Ovary (tissue), 10 donors: ENCODE measurements at regions of chr16 and their contacts with region 1.

Region 1: DNA sequence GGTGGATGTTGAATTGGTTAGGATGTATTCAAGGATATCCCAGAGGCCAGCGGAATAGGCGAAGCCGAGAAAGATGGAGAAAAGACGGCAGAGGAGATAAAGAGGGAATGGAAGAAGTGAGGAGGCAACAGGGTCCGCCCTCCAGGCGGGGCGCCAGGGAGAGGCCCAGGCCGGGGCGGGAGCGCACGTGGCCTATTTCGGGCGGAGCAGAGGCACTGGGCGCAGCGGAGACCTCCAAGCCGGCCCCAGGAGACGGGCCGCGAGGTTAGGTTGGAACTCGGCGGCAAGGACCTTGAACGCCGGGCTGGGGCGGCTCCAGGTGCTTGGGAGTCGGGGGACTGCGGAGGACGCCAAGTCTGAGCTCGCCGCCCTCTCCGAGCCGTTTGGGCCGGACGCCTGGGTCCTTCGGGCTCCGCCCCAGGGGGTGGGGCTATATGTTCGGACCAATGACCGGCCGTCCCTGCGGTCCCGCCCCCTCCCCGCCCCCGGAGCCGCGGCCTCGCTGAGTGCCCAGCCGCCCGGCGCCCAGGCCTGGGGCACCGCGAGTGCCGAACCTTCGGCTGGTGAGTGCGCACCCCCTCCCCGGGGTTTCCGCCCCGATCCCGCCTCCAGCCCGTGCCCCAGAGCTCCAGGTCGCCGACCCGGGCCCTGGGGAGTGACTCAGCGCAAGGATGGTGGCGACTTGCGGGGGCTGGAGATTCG is at the start of gene ZNF771:
- DNase-seq: peak; percentile 93 to 98 (median 95)
- H3K4me3 ChIP-seq: peak within 1 kb of the TSS; percentile 61
- H3K27ac ChIP-seq: peak within 1 kb of the TSS; percentile 40 to 81
- H3K4me1 ChIP-seq: peaks cover 9% of the 10 kb centered on the region
- H3K27me3 ChIP-seq: no peaks in the 10 kb centered on the region
- CTCF ChIP-seq: peak in 2 of 3 donors; percentile 13 to 19
- EP300 ChIP-seq: no peak
- POLR2A ChIP-seq: peak; percentile 80
- total RNA-seq, gene ZNF771: 12.4 to 33.3 (median 18.7) TPM

Region 2: GRCh38 chr16:30032083-30032819 is 375.0 kb before region 1 on chr16:
- intact Hi-C with region 1: no loop called
- DNase-seq: peak in 4 of 5 donors; percentile 36 to 51 (median 47)
- H3K4me3 ChIP-seq: no peak overlapping the region
- H3K27ac ChIP-seq: no peak overlapping the region
- H3K4me1 ChIP-seq: no peaks in the 10 kb centered on the region
- H3K27me3 ChIP-seq: peaks cover 3% of the 10 kb centered on the region
- CTCF ChIP-seq: peak; percentile 46 to 50 (median 47)
- EP300 ChIP-seq: no peak
- POLR2A ChIP-seq: no peak

Region 3: GRCh38 chr16:30065143-30065850 is 342.0 kb before region 1 on chr16 and contains the start of gene ALDOA:
- intact Hi-C with region 1: loop called in 1 of 4 experiments (anchors 10 kb)
- DNase-seq: peak; percentile 98
- H3K4me3 ChIP-seq: peak within 1 kb of the TSS; percentile 97
- H3K27ac ChIP-seq: peak within 1 kb of the TSS; percentile 91 to 99
- H3K4me1 ChIP-seq: peaks cover 21% of the 10 kb centered on the region
- H3K27me3 ChIP-seq: no peaks in the 10 kb centered on the region
- CTCF ChIP-seq: peak in 1 of 3 donors; percentile 38
- EP300 ChIP-seq: peak; percentile 65
- POLR2A ChIP-seq: peak; percentile 91
- total RNA-seq, gene ALDOA: 395 to 1,259 (median 847) TPM

Region 4: DNA sequence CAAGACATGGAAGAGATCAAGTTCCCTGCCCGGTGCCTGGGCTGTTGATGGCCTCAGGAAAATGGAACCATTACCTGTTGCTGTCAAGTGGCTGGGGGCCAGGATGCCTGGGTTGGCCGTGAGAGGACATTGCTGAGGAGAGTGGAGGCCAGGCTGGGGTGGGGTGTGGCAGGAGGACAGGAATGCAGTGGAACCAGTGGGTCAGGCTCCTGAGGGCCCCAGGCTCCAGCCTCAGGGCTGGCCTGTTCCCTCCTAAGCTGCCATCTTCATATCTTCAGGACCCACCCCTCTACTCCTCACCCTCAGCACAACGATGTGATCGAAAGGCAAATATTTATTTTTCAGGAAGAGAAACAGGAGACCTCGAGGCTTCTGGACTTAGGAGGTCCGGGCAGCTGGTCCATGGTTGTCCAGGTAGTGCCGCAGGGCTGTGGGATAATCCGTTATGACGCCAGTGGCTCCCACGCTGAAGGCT is 302.7 kb before region 1 on chr16:
- intact Hi-C with region 1: loop called in 2 of 4 experiments (anchors 5 to 10 kb)
- DNase-seq: no peak
- H3K4me3 ChIP-seq: no peak overlapping the region
- H3K27ac ChIP-seq: no peak overlapping the region
- H3K4me1 ChIP-seq: no peaks in the 10 kb centered on the region
- H3K27me3 ChIP-seq: no peaks in the 10 kb centered on the region
- CTCF ChIP-seq: no peak
- EP300 ChIP-seq: no peak
- POLR2A ChIP-seq: no peak

Region 5: GRCh38 chr16:30370444-30371247 is 36.6 kb before region 1 on chr16 and contains the start of gene TBC1D10B:
- intact Hi-C with region 1: loop called in 1 of 4 experiments (anchors 5 kb)
- DNase-seq: peak; percentile 96 to 100 (median 98)
- H3K4me3 ChIP-seq: peak within 1 kb of the TSS; percentile 72
- H3K27ac ChIP-seq: peak within 1 kb of the TSS; percentile 77 to 81
- H3K4me1 ChIP-seq: peaks cover 6% of the 10 kb centered on the region
- H3K27me3 ChIP-seq: no peaks in the 10 kb centered on the region
- CTCF ChIP-seq: peak in 1 of 3 donors; percentile 43
- EP300 ChIP-seq: no peak
- POLR2A ChIP-seq: no peak
- total RNA-seq, gene TBC1D10B: 18.4 to 46.9 (median 38.0) TPM